ENCODE measurements at regions of chr4 and their contacts with region 1.

Region 1: GRCh38 chr4:75469896-75470295 is 44.3 kb downstream of the RCHY1 start:
- DNase-seq: no peak
- H3K4me3 ChIP-seq: no peak overlapping the region
- H3K27ac ChIP-seq: no peak overlapping the region
- H3K4me1 ChIP-seq: no peaks in the 10 kb centered on the region
- H3K27me3 ChIP-seq: no peaks in the 10 kb centered on the region
- CTCF ChIP-seq: no peak

Region 2: GRCh38 chr4:75344915-75345314 is 125.0 kb before region 1 on chr4:
- CTCF ChIA-PET with region 1: no interaction called
- POLR2A ChIA-PET with region 1: no interaction called
- intact Hi-C with region 1: no loop called
- DNase-seq: no peak
- H3K4me3 ChIP-seq: no peak overlapping the region
- H3K27ac ChIP-seq: no peak overlapping the region
- H3K4me1 ChIP-seq: no peaks in the 10 kb centered on the region
- H3K27me3 ChIP-seq: no peaks in the 10 kb centered on the region; the same call in 1 of the 2 replicates
- CTCF ChIP-seq: no peak

Region 3: DNA sequence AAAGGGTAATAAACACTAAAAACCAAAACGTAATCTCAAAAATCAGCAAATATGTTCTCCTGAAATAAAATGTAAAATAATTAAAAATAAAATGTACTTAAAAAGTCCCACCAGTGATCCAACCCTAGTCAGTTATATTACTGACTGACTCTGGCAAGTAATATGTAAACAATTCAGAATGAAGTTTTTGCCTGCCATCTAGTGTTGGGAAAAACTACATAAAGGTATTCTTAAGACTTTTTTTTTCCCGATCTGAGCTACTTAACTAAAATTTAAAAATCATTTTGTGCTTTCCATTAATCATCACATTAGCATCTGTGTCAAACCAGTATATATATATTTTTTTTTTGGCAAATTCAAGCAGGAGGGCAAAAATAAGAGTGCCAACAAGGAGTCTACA is 20.3 kb after region 1 on chr4:
- CTCF ChIA-PET with region 1: interaction called, 15 read pairs
- POLR2A ChIA-PET with region 1: no interaction called
- intact Hi-C with region 1: no loop called
- DNase-seq: no peak
- H3K4me3 ChIP-seq: no peak overlapping the region
- H3K27ac ChIP-seq: no peak overlapping the region
- H3K4me1 ChIP-seq: no peaks in the 10 kb centered on the region
- H3K27me3 ChIP-seq: no peaks in the 10 kb centered on the region
- CTCF ChIP-seq: peak; percentile 29

Measured in PC-9 (cell line).